Ovary (tissue), 10 donors: ENCODE measurements at regions of chr12 and their contacts with region 1.

Region 1: GRCh38 chr12:77152623-77153193 is 87.3 kb upstream of the E2F7 start:
- DNase-seq: peak in 2 of 5 donors; percentile 13 to 19
- H3K4me3 ChIP-seq: no peak overlapping the region
- H3K27ac ChIP-seq: no peak overlapping the region
- H3K4me1 ChIP-seq: no peaks in the 10 kb centered on the region
- H3K27me3 ChIP-seq: no peaks in the 10 kb centered on the region
- CTCF ChIP-seq: peak in 2 of 3 donors; percentile 53 to 56
- EP300 ChIP-seq: no peak
- POLR2A ChIP-seq: no peak

Region 2: DNA sequence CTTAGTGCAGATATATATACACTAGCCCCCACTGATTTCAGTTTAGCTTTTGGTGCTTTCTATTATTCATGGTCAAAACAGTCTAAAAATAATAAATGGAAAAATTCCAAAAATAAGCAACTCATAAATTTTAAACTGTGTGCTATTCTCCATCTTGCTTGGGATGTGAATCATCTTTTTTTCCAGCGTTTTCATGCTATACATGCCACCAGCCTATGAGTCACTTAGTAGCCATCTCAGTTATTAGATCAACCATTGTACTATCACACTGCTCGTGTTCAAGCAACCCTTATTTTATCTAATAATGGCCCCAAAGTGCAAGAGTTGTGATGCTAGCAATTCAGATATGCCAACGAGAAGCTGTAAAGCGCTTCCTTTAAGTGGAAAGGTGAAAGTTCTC is 1567.4 kb before region 1 on chr12:
- intact Hi-C with region 1: no loop called
- DNase-seq: no peak
- H3K4me3 ChIP-seq: no peak overlapping the region
- H3K27ac ChIP-seq: no peak overlapping the region
- H3K4me1 ChIP-seq: no peaks in the 10 kb centered on the region
- H3K27me3 ChIP-seq: no peaks in the 10 kb centered on the region
- CTCF ChIP-seq: no peak
- EP300 ChIP-seq: no peak
- POLR2A ChIP-seq: no peak

Region 3: GRCh38 chr12:77166696-77167095 is 14.0 kb after region 1 on chr12:
- intact Hi-C with region 1: no loop called
- DNase-seq: no peak
- H3K4me3 ChIP-seq: no peak overlapping the region
- H3K27ac ChIP-seq: no peak overlapping the region
- H3K4me1 ChIP-seq: no peaks in the 10 kb centered on the region
- H3K27me3 ChIP-seq: no peaks in the 10 kb centered on the region
- CTCF ChIP-seq: no peak
- EP300 ChIP-seq: no peak
- POLR2A ChIP-seq: no peak

Region 4: GRCh38 chr12:77324763-77325468 is 172.2 kb after region 1 on chr12:
- intact Hi-C with region 1: loop called in 2 of 4 experiments (anchors 5 to 10 kb)
- DNase-seq: peak; percentile 80 to 86 (median 85)
- H3K4me3 ChIP-seq: peak overlapping the region; percentile 66
- H3K27ac ChIP-seq: peak overlapping the region; percentile 33 to 83
- H3K4me1 ChIP-seq: peaks cover 5% of the 10 kb centered on the region
- H3K27me3 ChIP-seq: no peaks in the 10 kb centered on the region
- CTCF ChIP-seq: peak; percentile 28 to 51 (median 50)
- EP300 ChIP-seq: no peak
- POLR2A ChIP-seq: no peak

Region 5: GRCh38 chr12:77685112-77685511 is 532.4 kb after region 1 on chr12:
- intact Hi-C with region 1: loop called in 3 of 4 experiments (anchors 5 kb)
- DNase-seq: peak; percentile 55 to 79 (median 61)
- H3K4me3 ChIP-seq: no peak overlapping the region
- H3K27ac ChIP-seq: no peak overlapping the region
- H3K4me1 ChIP-seq: peaks cover under 1% of the 10 kb centered on the region
- H3K27me3 ChIP-seq: no peaks in the 10 kb centered on the region
- CTCF ChIP-seq: peak in 2 of 3 donors; percentile 45 to 51
- EP300 ChIP-seq: no peak
- POLR2A ChIP-seq: no peak

Region 6: DNA sequence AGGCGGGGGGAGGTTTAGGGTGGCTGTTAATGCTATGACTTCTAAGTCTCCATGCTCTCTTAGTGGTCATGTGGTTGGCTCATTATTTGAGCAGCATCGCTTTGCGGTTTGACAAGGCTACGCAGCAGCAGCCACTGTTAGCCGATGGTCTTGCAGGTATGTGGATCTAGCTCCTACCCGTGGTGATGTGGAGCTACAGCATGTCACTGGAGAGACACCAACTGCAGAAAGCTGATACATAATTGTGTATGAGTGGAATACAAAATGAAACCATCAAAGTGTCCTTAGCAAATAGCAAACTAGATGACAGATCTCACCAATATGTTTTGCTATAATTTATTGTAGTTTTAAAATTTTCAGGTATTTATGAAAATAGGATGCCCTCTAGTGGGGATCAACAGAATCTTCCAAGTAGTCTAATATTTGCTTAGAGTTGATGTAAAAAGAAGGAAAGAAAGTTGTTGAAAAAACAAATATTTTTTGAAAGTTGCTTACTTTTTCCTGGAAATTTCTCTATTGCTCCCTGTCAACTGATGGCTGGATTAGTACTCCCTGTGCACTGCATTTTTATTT is 772.9 kb after region 1 on chr12:
- intact Hi-C with region 1: loop called in 2 of 4 experiments (anchors 5 to 10 kb)
- DNase-seq: peak; percentile 70 to 87 (median 75)
- H3K4me3 ChIP-seq: no peak overlapping the region
- H3K27ac ChIP-seq: no peak overlapping the region
- H3K4me1 ChIP-seq: peaks cover 1% of the 10 kb centered on the region
- H3K27me3 ChIP-seq: no peaks in the 10 kb centered on the region
- CTCF ChIP-seq: peak; percentile 77 to 99 (median 97)
- EP300 ChIP-seq: no peak
- POLR2A ChIP-seq: no peak